IMR-90 (cell line): ENCODE measurements at regions of chr3 and their contacts with region 1.

Region 1: GRCh38 chr3:42711491-42712343 is 9.1 kb upstream of the HHATL start:
- DNase-seq: no peak
- ATAC-seq: no peak; the same call in 1 of the 2 replicates
- H3K4me3 ChIP-seq: no peak overlapping the region
- H3K27ac ChIP-seq: no peak overlapping the region
- H3K4me1 ChIP-seq: no peaks in the 10 kb centered on the region
- H3K27me3 ChIP-seq: peaks cover 61% of the 10 kb centered on the region
- CTCF ChIP-seq: no peak
- POLR2A ChIP-seq: no peak
- RAD21 ChIP-seq: no peak

Region 2: GRCh38 chr3:42410370-42411131 is 301.2 kb before region 1 on chr3 and contains the start of gene LYZL4:
- CTCF ChIA-PET with region 1: no interaction called
- POLR2A ChIA-PET with region 1: no interaction called
- dilution Hi-C with region 1: no loop called
- in situ Hi-C with region 1: no loop called
- intact Hi-C with region 1: no loop called
- DNase-seq: no peak
- ATAC-seq: no peak
- H3K4me3 ChIP-seq: no peak within 1 kb of the TSS
- H3K27ac ChIP-seq: no peak within 1 kb of the TSS
- H3K4me1 ChIP-seq: no peaks in the 10 kb centered on the region
- H3K27me3 ChIP-seq: no peaks in the 10 kb centered on the region
- CTCF ChIP-seq: no peak
- POLR2A ChIP-seq: no peak
- RAD21 ChIP-seq: no peak
- total RNA-seq, gene LYZL4: not detected in 2 replicates

Region 3: DNA sequence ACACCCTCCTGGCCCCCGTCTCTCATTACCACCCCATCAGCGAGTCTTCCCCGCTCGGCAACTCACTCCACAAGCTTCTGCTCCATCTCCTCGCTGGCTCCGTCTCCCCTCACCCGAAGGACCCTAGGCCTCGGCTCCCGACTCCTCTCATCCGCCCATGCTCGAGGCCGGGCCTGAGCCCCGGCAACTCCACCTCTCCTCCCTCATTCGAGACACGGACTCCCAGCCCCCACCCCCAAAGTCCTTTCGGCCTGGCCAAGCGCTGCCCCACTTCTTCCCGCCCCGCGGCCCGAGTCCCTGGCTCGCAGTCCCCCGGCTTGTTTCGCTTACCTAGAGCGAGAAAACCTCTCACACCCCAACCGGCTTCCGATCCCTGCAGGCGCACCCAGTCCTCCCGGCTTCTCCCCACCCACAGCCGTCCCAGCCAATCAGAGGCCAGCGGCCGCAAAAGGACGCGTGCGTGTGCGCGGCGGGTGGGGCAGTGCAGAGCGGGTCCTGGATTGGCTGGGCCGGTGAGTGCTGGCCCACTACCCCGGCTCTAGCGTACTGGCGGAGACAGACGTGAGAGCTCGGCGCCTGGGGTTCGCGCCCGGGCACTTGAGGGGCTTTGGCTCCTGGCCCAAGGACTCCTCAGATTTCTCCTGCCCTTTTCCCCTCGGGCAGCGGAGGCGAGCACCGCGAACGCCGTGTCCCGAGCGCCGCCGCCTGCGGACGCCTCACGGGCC is 92.6 kb after region 1 on chr3 and contains the start of gene HIGD1A:
- CTCF ChIA-PET with region 1: no interaction called
- POLR2A ChIA-PET with region 1: interaction called, 14 read pairs
- dilution Hi-C with region 1: no loop called
- in situ Hi-C with region 1: no loop called
- intact Hi-C with region 1: no loop called
- DNase-seq: peak; percentile 92
- ATAC-seq: peak; percentile 99
- H3K4me3 ChIP-seq: peak within 1 kb of the TSS; percentile 83
- H3K27ac ChIP-seq: peak within 1 kb of the TSS; percentile 73
- H3K4me1 ChIP-seq: peaks cover 3% of the 10 kb centered on the region; the same call in 1 of the 2 replicates
- H3K27me3 ChIP-seq: peaks cover 2% of the 10 kb centered on the region; the same call in 1 of the 2 replicates
- CTCF ChIP-seq: no peak
- POLR2A ChIP-seq: peak; percentile 89
- RAD21 ChIP-seq: no peak
- total RNA-seq, gene HIGD1A: 86.6 and 201 TPM in 2 replicates

Region 4: GRCh38 chr3:42852441-42852840 is 140.7 kb after region 1 on chr3:
- CTCF ChIA-PET with region 1: no interaction called
- POLR2A ChIA-PET with region 1: no interaction called
- dilution Hi-C with region 1: no loop called
- in situ Hi-C with region 1: no loop called
- intact Hi-C with region 1: no loop called
- DNase-seq: no peak
- ATAC-seq: no peak
- H3K4me3 ChIP-seq: no peak overlapping the region
- H3K27ac ChIP-seq: no peak overlapping the region
- H3K4me1 ChIP-seq: no peaks in the 10 kb centered on the region
- H3K27me3 ChIP-seq: peaks cover 44% of the 10 kb centered on the region
- CTCF ChIP-seq: no peak
- POLR2A ChIP-seq: no peak
- RAD21 ChIP-seq: no peak